ENCODE measurements at regions of chr12 and their contacts with region 1.

Region 1: DNA sequence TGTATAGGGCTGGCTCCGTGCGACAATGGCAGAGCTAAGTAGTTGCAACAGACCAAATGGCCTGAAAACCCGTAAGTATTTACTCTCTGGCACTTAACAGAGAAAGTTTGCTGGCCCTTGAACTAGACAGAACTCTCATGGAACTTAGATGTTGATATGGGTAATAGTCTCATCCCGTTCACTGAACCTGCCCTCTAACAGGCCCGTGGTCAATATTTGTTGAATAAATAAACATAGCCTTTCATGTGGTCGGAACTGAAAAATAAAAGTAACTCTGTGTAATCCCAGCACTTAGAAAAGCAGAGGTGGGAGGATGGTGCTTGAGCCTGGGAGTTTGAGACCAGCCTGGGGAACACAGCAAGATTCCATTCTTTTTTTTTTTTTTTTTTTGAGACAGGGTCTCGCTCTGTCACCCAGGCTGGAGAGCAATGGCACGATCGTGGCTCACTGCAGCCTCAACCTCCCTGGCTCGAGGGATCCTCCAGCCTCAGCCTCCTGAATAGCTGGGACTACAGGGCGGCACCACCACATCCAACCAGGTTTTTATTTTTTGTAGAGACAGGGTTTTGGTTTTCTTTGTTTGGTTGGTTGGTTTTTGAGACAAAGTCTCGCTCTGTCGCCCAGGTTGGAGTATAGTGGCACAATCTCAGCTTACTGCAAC is 29.7 kb downstream of the KDM2B start:
- DNase-seq: no peak
- H3K4me3 ChIP-seq: no peak overlapping the region
- H3K27ac ChIP-seq: no peak overlapping the region
- H3K4me1 ChIP-seq: no peaks in the 10 kb centered on the region
- H3K27me3 ChIP-seq: no peaks in the 10 kb centered on the region
- CTCF ChIP-seq: no peak
- POLR2A ChIP-seq: no peak

Region 2: GRCh38 chr12:121536899-121537813 is 13.9 kb before region 1 on chr12:
- CTCF ChIA-PET with region 1: interaction called, 20 read pairs
- POLR2A ChIA-PET with region 1: no interaction called
- dilution Hi-C with region 1: no loop called
- intact Hi-C with region 1: no loop called
- DNase-seq: peak; percentile 74
- H3K4me3 ChIP-seq: peak overlapping the region; percentile 38 to 63 (median 56)
- H3K27ac ChIP-seq: peak overlapping the region; percentile 20
- H3K4me1 ChIP-seq: peaks cover 20% of the 10 kb centered on the region
- H3K27me3 ChIP-seq: no peaks in the 10 kb centered on the region
- CTCF ChIP-seq: no peak
- POLR2A ChIP-seq: no peak

Region 3: DNA sequence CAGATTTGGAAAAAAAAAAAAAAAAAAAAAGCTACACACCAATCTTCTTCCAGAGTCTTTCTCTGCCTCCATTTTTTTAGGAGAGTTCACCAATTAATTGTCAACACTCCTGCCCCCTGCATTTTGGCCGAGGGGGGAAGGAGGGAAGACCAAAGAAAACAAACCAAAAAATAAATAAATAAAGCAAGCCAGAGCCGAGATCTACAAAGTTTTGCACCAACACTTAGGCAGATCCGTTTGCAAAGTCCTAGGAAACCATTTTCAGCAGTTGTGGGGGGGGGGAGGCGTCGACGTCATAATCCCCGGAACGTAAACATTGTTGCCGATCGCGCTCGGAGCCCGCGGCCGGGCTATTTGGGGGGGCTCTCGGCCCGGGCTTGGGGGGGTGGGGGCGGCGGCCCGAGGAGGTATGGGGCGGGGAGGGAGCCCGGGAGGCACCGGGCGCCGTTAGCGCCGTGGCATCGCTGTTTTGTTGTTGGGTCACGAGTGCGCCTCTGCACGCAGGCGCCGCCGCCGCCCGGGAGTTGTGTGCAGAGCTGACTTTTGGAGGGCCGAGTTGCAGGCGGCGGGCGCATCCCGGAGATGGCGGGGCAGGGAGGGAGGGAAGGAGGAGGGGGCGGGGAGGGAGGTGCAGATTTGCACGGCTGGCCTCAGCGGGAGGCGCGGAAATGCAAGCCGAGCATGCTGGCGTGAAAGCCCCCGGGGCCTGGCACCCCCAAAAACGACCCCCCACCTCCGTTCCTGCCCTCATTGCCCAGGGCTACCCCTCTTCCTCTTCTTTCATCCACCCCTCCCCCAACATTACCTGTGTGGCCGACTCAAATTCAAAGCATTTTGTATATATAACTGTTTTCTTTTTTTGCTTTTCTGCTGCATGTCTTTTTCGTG is 29.1 kb after region 1 on chr12:
- CTCF ChIA-PET with region 1: interaction called, 38 read pairs
- POLR2A ChIA-PET with region 1: no interaction called
- dilution Hi-C with region 1: no loop called
- intact Hi-C with region 1: loop called (anchors 2 kb)
- DNase-seq: peak; percentile 58
- H3K4me3 ChIP-seq: peak overlapping the region; percentile 59 to 84 (median 76)
- H3K27ac ChIP-seq: peak overlapping the region; percentile 73
- H3K4me1 ChIP-seq: peaks cover 33% of the 10 kb centered on the region
- H3K27me3 ChIP-seq: no peaks in the 10 kb centered on the region
- CTCF ChIP-seq: no peak
- POLR2A ChIP-seq: peak; percentile 17

Region 4: DNA sequence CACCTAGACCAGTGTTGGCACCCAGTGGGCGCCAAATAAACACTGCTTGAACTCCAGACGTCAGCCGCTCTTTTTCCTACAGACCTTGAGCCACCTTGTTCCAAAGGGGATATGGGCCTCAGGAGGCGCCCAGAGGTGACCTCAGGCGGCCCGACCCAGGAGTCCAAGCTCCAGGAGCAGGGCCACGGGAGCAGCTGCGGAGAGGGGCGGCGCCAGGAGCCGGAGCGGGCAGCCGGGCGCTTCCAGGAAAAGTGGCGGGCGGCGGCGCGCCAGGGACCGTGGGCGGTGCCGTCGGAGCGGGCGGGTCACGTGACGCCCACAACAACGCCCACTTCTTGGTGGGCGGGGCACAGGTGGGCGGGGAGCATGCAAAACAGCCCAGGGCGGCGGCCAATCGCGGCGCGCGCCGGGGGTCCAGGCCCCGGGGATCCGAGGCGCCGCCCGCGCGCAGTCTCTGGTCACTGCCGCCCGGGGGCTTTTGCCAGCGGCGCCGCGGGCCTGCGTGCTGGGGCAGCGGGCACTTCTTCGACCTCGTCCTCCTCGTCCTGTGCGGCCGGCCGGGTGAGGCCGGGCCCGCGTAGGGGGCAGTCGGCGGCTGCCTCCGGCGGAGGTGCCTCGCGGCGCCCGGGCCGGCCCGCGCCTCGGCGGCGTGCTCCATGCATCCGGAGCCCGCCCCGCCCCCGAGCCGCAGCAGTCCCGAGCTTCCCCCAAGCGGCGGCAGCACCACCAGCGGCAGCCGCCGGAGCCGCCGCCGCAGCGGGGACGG is 75.2 kb after region 1 on chr12 and contains the start of gene ORAI1:
- CTCF ChIA-PET with region 1: interaction called, 108 read pairs
- POLR2A ChIA-PET with region 1: interaction called, 4 read pairs
- dilution Hi-C with region 1: no loop called
- intact Hi-C with region 1: loop called (anchors 1 kb)
- DNase-seq: peak; percentile 94
- H3K4me3 ChIP-seq: peak within 1 kb of the TSS; percentile 47 to 67 (median 55)
- H3K27ac ChIP-seq: peak within 1 kb of the TSS; percentile 77
- H3K4me1 ChIP-seq: peaks cover 43% of the 10 kb centered on the region
- H3K27me3 ChIP-seq: no peaks in the 10 kb centered on the region
- CTCF ChIP-seq: no peak
- POLR2A ChIP-seq: peak; percentile 92
- total RNA-seq, gene ORAI1: 29.0 and 30.5 TPM in 2 replicates

Region 5: GRCh38 chr12:121649819-121650353 is 98.8 kb after region 1 on chr12:
- CTCF ChIA-PET with region 1: interaction called, 10 read pairs
- POLR2A ChIA-PET with region 1: no interaction called
- dilution Hi-C with region 1: no loop called
- intact Hi-C with region 1: no loop called
- DNase-seq: no peak
- H3K4me3 ChIP-seq: no peak overlapping the region
- H3K27ac ChIP-seq: no peak overlapping the region
- H3K4me1 ChIP-seq: no peaks in the 10 kb centered on the region
- H3K27me3 ChIP-seq: no peaks in the 10 kb centered on the region
- CTCF ChIP-seq: no peak
- POLR2A ChIP-seq: no peak

Region 6: GRCh38 chr12:121678716-121679580 is 127.8 kb after region 1 on chr12:
- CTCF ChIA-PET with region 1: interaction called, 154 read pairs
- POLR2A ChIA-PET with region 1: no interaction called
- dilution Hi-C with region 1: no loop called
- intact Hi-C with region 1: loop called (anchors 1 kb)
- DNase-seq: no peak
- H3K4me3 ChIP-seq: no peak overlapping the region
- H3K27ac ChIP-seq: no peak overlapping the region
- H3K4me1 ChIP-seq: no peaks in the 10 kb centered on the region
- H3K27me3 ChIP-seq: no peaks in the 10 kb centered on the region
- CTCF ChIP-seq: no peak
- POLR2A ChIP-seq: no peak

Measured in endothelial cell of umbilical vein (primary cell).